Posterior vena cava (tissue), 2 donors: ENCODE measurements at regions of chr18 and their contacts with region 1.

Region 1: GRCh38 chr18:10965119-10965518 is 184.2 kb downstream of the PIEZO2 start:
- DNase-seq: no peak

Region 2: GRCh38 chr18:10713409-10713808 is 251.7 kb before region 1 on chr18:
- intact Hi-C with region 1: loop called in 1 of 2 experiments (anchors 5 kb)
- DNase-seq: no peak

Region 3: GRCh38 chr18:11908182-11909060 is 943.3 kb after region 1 on chr18 and contains the start of gene MPPE1:
- intact Hi-C with region 1: loop called in 1 of 2 experiments (anchors 5 kb)
- DNase-seq: peak; percentile 97
- total RNA-seq, gene MPPE1: 26.2 to 39.6 TPM